ENCODE measurements at regions of chr11 and their contacts with region 1.

Region 1: DNA sequence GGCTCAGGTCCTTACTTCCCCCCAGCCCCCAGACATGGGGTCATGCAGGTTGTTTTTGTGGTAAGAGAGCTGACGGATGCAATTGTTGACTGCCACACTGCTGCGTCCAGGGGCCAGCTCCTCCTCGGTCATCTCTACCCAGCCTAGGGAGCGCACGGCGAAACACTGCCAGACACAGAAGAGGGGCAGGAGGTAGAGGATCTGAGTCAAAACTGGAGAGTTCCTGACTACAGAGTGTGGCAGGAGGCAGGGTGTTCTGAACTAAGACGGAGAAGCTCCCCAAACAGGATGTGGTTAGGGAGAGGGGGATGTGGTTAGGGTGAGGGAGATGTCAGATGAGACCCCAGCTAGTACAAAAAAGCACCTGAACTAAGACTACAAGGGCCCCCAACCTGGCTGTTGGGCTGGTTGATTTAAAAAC is 12.3 kb downstream of the SMPD1 start:
- DNase-seq: peak; percentile 95
- H3K4me3 ChIP-seq: peak overlapping the region; percentile 58
- H3K27ac ChIP-seq: peak overlapping the region; percentile 98
- H3K4me1 ChIP-seq: peaks cover 60% of the 10 kb centered on the region
- CTCF ChIP-seq: no peak

Region 2: DNA sequence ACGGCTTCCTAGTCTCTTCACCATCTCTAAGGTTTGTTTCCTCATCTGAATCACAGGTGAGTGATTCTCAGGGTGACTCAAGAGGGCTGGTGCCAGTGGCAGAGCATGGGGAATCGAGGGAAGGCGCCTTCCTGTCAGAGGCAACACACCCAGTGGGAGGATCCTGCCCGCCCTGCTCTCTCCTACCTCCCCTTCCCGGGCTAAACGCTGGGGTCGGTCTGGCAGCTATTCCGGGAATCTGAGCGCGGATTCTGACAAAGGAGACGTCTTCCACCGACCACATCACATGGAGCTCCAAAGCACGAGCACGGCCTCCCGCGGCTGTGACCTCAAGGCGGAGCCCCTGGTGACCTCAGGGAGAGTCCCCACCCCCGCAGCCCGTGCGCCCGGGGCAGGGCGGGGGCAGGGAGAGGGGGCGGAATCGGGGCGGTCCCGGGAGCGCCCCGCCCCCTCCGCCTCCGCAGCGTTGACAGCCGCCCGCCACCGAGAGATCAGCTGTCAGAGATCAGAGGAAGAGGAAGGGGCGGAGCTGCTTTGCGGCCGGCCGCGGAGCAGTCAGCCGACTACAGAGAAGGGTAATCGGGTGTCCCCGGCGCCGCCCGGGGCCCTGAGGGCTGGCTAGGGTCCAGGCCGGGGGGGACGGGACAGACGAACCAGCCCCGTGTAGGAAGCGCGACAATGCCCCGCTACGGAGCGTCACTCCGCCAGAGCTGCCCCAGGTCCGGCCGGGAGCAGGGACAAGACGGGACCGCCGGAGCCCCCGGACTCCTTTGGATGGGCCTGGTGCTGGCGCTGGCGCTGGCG is 12.4 kb before region 1 on chr11 and contains the start of gene SMPD1:
- CTCF ChIA-PET with region 1: interaction called, 6 read pairs
- POLR2A ChIA-PET with region 1: interaction called, 23 read pairs
- intact Hi-C with region 1: no loop called
- DNase-seq: peak; percentile 93
- H3K4me3 ChIP-seq: peak within 1 kb of the TSS; percentile 73
- H3K27ac ChIP-seq: peak within 1 kb of the TSS; percentile 22
- H3K4me1 ChIP-seq: peaks cover 24% of the 10 kb centered on the region
- CTCF ChIP-seq: no peak
- total RNA-seq, gene SMPD1: 5.1 and 5.4 TPM in 2 replicates

Region 3: DNA sequence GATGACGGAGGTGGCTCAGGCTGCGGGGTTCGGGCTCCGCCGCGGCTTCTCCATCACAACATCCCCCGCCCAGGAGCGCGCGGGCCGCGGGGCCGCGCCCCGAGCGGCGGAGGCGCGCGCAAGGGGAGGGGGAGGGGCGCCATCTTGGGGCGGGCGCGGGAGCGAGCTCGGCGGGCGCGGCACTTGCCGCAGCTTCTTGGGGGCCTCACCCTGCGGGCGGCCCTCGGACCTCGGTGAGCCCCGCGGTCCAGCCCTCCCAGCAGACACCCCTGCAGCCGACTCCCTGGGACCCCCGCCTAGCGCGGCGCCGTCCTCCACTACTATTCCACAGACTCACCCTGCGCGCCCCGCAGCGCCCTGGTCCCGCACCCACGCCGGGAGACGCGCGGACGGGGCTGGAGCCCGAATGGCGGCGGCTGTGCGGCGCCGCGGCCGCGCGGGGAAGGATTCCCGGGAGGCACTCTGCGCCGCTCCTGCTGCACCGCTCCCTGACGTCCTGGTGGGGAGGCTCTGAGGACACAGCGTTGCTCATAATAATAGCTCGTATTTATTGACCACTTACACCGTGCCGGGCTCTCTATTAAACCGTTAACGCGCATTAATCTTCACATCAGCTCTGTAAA is 16.5 kb after region 1 on chr11 and contains the start of gene APBB1:
- CTCF ChIA-PET with region 1: interaction called, 4 read pairs
- POLR2A ChIA-PET with region 1: interaction called, 16 read pairs
- intact Hi-C with region 1: loop called (anchors 1 kb)
- DNase-seq: peak; percentile 81
- H3K4me3 ChIP-seq: peak within 1 kb of the TSS; percentile 87
- H3K27ac ChIP-seq: no peak within 1 kb of the TSS
- H3K4me1 ChIP-seq: peaks cover 36% of the 10 kb centered on the region
- CTCF ChIP-seq: no peak
- total RNA-seq, gene APBB1: 30.4 and 36.1 TPM in 2 replicates

Measured in OCI-LY7 (cell line).